ENCODE measurements at regions of chr20 and their contacts with region 1.

Region 1: GRCh38 chr20:2172305-2173175 is 70.9 kb downstream of the STK35 start:
- DNase-seq: peak; percentile 45
- ATAC-seq: peak; percentile 96
- H3K4me3 ChIP-seq: no peak overlapping the region
- H3K27ac ChIP-seq: no peak overlapping the region
- H3K4me1 ChIP-seq: no peaks in the 10 kb centered on the region
- H3K27me3 ChIP-seq: peaks cover 32% of the 10 kb centered on the region
- CTCF ChIP-seq: peak; percentile 94
- POLR2A ChIP-seq: 0 out of 2 replicates have a peak, but pooled peaks have one; percentile 27
- RAD21 ChIP-seq: peak; percentile 98

Region 2: GRCh38 chr20:1790386-1790785 is 382.2 kb before region 1 on chr20:
- CTCF ChIA-PET with region 1: no interaction called
- POLR2A ChIA-PET with region 1: no interaction called
- dilution Hi-C with region 1: no loop called
- in situ Hi-C with region 1: loop called (anchors 10 kb)
- intact Hi-C with region 1: no loop called
- DNase-seq: no peak
- ATAC-seq: no peak
- H3K4me3 ChIP-seq: no peak overlapping the region
- H3K27ac ChIP-seq: 0 out of 2 replicates have a peak overlapping the region, but pooled peaks have one; percentile 13
- H3K4me1 ChIP-seq: no peaks in the 10 kb centered on the region
- H3K27me3 ChIP-seq: peaks cover 50% of the 10 kb centered on the region
- CTCF ChIP-seq: no peak
- POLR2A ChIP-seq: no peak
- RAD21 ChIP-seq: no peak

Region 3: DNA sequence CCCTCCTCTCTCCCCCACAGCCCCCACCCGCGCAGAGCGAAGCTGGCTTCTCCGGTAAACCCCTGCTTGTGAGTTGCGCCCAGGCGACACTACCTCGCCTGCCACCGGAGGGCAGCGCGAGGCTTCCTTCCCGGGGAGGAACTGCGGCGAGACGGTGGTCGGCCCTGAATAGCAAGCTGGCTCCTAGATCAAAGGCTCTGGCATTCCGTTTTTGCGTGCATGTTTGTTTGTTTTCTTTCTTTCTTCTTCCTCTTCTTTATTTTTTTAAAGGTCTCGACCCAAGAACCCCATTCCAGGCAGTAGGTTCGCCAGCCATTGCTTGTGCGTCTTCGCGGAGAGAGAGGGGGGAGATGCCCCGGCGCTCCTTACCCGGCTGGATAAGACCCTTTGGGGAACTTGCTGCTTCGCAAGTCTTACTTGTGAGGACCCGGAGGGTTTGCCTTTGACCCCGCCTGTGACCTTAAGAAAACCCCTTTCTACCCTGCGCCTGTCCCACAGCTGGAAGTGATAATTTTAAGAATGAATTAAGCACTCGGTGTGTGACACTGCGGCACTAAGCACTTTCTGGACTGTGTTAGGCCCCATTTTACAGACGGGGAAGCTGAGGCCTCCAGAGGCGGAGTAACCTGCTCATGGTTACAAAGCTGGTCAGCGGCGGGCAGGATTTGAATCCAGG is 370.0 kb before region 1 on chr20:
- CTCF ChIA-PET with region 1: interaction called, 5 read pairs
- POLR2A ChIA-PET with region 1: no interaction called
- dilution Hi-C with region 1: no loop called
- in situ Hi-C with region 1: loop called (anchors 10 kb)
- intact Hi-C with region 1: loop called (anchors 1 kb)
- DNase-seq: peak; percentile 76
- ATAC-seq: peak; percentile 68
- H3K4me3 ChIP-seq: peak overlapping the region; percentile 50
- H3K27ac ChIP-seq: no peak overlapping the region
- H3K4me1 ChIP-seq: peaks cover 5% of the 10 kb centered on the region
- H3K27me3 ChIP-seq: peaks cover 2% of the 10 kb centered on the region; the same call in 1 of the 2 replicates
- CTCF ChIP-seq: peak; percentile 77
- POLR2A ChIP-seq: no peak
- RAD21 ChIP-seq: peak; percentile 84

Region 4: DNA sequence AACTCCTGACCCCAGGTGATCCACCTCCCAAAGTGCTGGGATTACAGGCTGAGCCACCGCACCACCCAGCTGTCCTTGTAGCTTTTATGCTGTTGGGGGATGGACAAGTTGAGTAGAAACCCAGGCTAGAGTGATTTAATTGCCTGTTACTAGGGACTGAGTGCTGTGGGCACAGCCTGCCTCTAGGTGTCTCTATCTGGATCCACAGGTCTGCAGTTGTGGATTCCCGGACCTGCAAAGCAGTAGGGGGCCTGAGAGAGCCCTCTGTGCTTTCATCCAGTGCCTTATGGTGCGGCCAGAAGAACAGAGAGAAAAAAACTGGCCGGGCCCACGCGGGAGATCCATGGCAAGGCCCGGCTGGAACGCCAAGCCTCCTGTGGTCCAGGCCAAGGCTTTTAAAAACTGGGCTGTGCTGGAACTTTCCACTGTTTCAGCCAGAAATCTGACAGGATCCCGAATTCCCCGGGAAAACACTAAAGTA is 272.2 kb before region 1 on chr20:
- CTCF ChIA-PET with region 1: interaction called, 3 read pairs
- POLR2A ChIA-PET with region 1: no interaction called
- dilution Hi-C with region 1: no loop called
- in situ Hi-C with region 1: no loop called
- intact Hi-C with region 1: loop called (anchors 10 kb)
- DNase-seq: peak; percentile 80
- ATAC-seq: peak; percentile 90
- H3K4me3 ChIP-seq: no peak overlapping the region
- H3K27ac ChIP-seq: no peak overlapping the region
- H3K4me1 ChIP-seq: peaks cover 16% of the 10 kb centered on the region
- H3K27me3 ChIP-seq: no peaks in the 10 kb centered on the region
- CTCF ChIP-seq: peak; percentile 87
- POLR2A ChIP-seq: no peak
- RAD21 ChIP-seq: peak; percentile 64

Region 5: GRCh38 chr20:1965520-1966351 is 206.8 kb before region 1 on chr20:
- CTCF ChIA-PET with region 1: interaction called, 13 read pairs
- POLR2A ChIA-PET with region 1: no interaction called
- dilution Hi-C with region 1: no loop called
- in situ Hi-C with region 1: loop called (anchors 5 kb)
- intact Hi-C with region 1: loop called (anchors 1 kb)
- DNase-seq: peak; percentile 54
- ATAC-seq: peak; percentile 83
- H3K4me3 ChIP-seq: no peak overlapping the region
- H3K27ac ChIP-seq: no peak overlapping the region
- H3K4me1 ChIP-seq: no peaks in the 10 kb centered on the region
- H3K27me3 ChIP-seq: peaks cover 60% of the 10 kb centered on the region
- CTCF ChIP-seq: peak; percentile 86
- POLR2A ChIP-seq: no peak
- RAD21 ChIP-seq: peak; percentile 84

Region 6: DNA sequence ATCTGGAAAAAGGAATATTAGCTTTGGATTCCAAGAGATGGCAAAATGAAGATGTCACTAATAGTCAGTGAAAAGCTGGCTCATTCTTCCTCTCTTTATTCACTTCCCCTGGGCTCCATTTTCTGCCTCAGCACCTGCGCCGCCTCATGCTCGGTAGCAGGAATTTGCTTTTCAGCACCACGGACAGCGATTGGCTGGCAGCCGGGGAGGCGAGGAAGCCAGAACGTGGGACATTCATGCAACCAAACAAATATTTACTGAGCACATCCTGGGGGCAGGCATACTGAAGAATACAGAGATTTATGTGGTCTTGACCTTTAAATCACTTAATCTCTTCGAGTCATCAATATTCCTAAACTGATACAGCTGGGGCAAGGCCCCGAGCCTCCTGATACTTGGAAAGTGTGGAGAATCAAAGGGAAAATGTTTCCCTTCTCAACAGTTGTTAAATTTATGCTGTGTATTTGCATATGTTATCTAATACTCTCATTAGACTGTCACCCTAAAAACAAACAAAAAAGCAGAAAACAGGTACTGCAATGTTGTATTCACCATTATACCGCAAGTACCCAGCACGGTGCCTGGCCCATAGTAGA is 166.6 kb before region 1 on chr20:
- CTCF ChIA-PET with region 1: interaction called, 10 read pairs
- POLR2A ChIA-PET with region 1: no interaction called
- dilution Hi-C with region 1: no loop called
- in situ Hi-C with region 1: loop called (anchors 10 kb)
- intact Hi-C with region 1: loop called (anchors 1 kb)
- DNase-seq: peak; percentile 45
- ATAC-seq: no peak; the same call in none of the 2 replicates
- H3K4me3 ChIP-seq: no peak overlapping the region
- H3K27ac ChIP-seq: no peak overlapping the region
- H3K4me1 ChIP-seq: no peaks in the 10 kb centered on the region
- H3K27me3 ChIP-seq: peaks cover 2% of the 10 kb centered on the region
- CTCF ChIP-seq: no peak
- POLR2A ChIP-seq: no peak
- RAD21 ChIP-seq: no peak

Region 7: GRCh38 chr20:2065099-2065498 is 107.4 kb before region 1 on chr20:
- CTCF ChIA-PET with region 1: no interaction called
- POLR2A ChIA-PET with region 1: no interaction called
- dilution Hi-C with region 1: no loop called
- in situ Hi-C with region 1: no loop called
- intact Hi-C with region 1: no loop called
- DNase-seq: no peak
- ATAC-seq: no peak
- H3K4me3 ChIP-seq: no peak overlapping the region
- H3K27ac ChIP-seq: no peak overlapping the region
- H3K4me1 ChIP-seq: no peaks in the 10 kb centered on the region
- H3K27me3 ChIP-seq: no peaks in the 10 kb centered on the region
- CTCF ChIP-seq: no peak
- POLR2A ChIP-seq: no peak
- RAD21 ChIP-seq: no peak

Region 8: GRCh38 chr20:2088891-2089290 is 83.6 kb before region 1 on chr20:
- CTCF ChIA-PET with region 1: interaction called, 3 read pairs
- POLR2A ChIA-PET with region 1: no interaction called
- dilution Hi-C with region 1: no loop called
- in situ Hi-C with region 1: no loop called
- intact Hi-C with region 1: loop called (anchors 2 kb)
- DNase-seq: no peak
- ATAC-seq: no peak
- H3K4me3 ChIP-seq: no peak overlapping the region
- H3K27ac ChIP-seq: no peak overlapping the region
- H3K4me1 ChIP-seq: no peaks in the 10 kb centered on the region
- H3K27me3 ChIP-seq: peaks cover 36% of the 10 kb centered on the region
- CTCF ChIP-seq: no peak
- POLR2A ChIP-seq: no peak
- RAD21 ChIP-seq: no peak

Region 9: GRCh38 chr20:2230716-2231488 is 58.4 kb after region 1 on chr20:
- CTCF ChIA-PET with region 1: no interaction called
- POLR2A ChIA-PET with region 1: no interaction called
- dilution Hi-C with region 1: no loop called
- in situ Hi-C with region 1: no loop called
- intact Hi-C with region 1: no loop called
- DNase-seq: no peak
- ATAC-seq: no peak
- H3K4me3 ChIP-seq: no peak overlapping the region
- H3K27ac ChIP-seq: no peak overlapping the region
- H3K4me1 ChIP-seq: no peaks in the 10 kb centered on the region
- H3K27me3 ChIP-seq: no peaks in the 10 kb centered on the region; the same call in 1 of the 2 replicates
- CTCF ChIP-seq: no peak
- POLR2A ChIP-seq: no peak
- RAD21 ChIP-seq: no peak